ENCODE measurements at regions of chr4 and their contacts with region 1.

Region 1: GRCh38 chr4:5956285-5957021 is 61.8 kb downstream of the C4orf50 start:
- DNase-seq: no peak
- H3K4me3 ChIP-seq: no peak overlapping the region
- H3K27ac ChIP-seq: no peak overlapping the region
- H3K27me3 ChIP-seq: peaks cover 0 to 6% (median 0%) of the 10 kb centered on the region in 45 donors
- CTCF ChIP-seq: no peak

Region 2: DNA sequence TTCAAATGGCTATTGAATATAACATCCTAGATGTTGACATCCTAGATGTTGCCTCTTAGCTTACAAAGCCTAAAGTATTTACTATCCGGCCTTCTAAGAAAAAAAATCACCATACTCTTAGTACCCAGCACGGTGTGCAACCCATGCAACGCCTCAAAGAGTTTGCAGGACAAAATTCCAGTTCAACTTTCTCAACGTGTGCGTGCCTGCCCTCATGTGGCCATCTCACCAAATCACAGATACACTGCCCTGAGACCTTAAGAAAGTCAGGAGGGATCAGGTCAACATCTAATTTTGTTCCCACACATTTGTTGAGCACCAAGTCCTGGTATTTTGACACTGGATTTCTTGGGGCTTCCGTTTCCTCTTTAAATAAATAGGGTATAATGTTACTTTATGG is 131.8 kb before region 1 on chr4:
- intact Hi-C with region 1: loop called in 1 of 2 experiments (anchors 5 kb)
- DNase-seq: peak in 1 of 10 donors; percentile 31
- H3K4me3 ChIP-seq: no peak overlapping the region
- H3K27ac ChIP-seq: no peak overlapping the region
- H3K27me3 ChIP-seq: no peaks in the 10 kb centered on the region
- CTCF ChIP-seq: peak in 35 of 56 donors; percentile 13 to 46 (median 28)